H1 (cell line): ENCODE measurements at regions of chr11 and their contacts with region 1.

Region 1: GRCh38 chr11:75445315-75445953 is 12.4 kb upstream of the KLHL35 start:
- DNase-seq: peak in 1 of 2 experiments; percentile 95
- H3K4me3 ChIP-seq: no peak overlapping the region
- H3K27ac ChIP-seq: no peak overlapping the region
- H3K4me1 ChIP-seq: no peaks in the 10 kb centered on the region
- H3K27me3 ChIP-seq: no peaks in the 10 kb centered on the region
- CTCF ChIP-seq: peak; percentile 94 to 98 (median 94)
- EP300 ChIP-seq: no peak
- POLR2A ChIP-seq: no peak
- RAD21 ChIP-seq: peak; percentile 99 to 100

Region 2: GRCh38 chr11:75428281-75428724 is 17.1 kb before region 1 on chr11:
- CTCF ChIA-PET with region 1: interaction called, 133 read pairs
- POLR2A ChIA-PET with region 1: interaction called, 20 read pairs
- DNase-seq: no peak
- H3K4me3 ChIP-seq: no peak overlapping the region
- H3K27ac ChIP-seq: no peak overlapping the region
- H3K4me1 ChIP-seq: peaks cover 0 to 23% (median 15%) of the 10 kb centered on the region in 4 experiments; a peak in 6 of 7 replicates
- H3K27me3 ChIP-seq: peaks cover 47 to 66% (median 60%) of the 10 kb centered on the region in 4 experiments
- CTCF ChIP-seq: no peak
- EP300 ChIP-seq: no peak
- POLR2A ChIP-seq: no peak
- RAD21 ChIP-seq: no peak

Region 3: GRCh38 chr11:75468534-75469340 is 23.3 kb after region 1 on chr11:
- CTCF ChIA-PET with region 1: interaction called, 155 read pairs
- POLR2A ChIA-PET with region 1: no interaction called
- DNase-seq: no peak
- H3K4me3 ChIP-seq: no peak overlapping the region
- H3K27ac ChIP-seq: no peak overlapping the region
- H3K4me1 ChIP-seq: peaks cover 0 to 7% (median 3%) of the 10 kb centered on the region in 4 experiments; a peak in 5 of 7 replicates
- H3K27me3 ChIP-seq: no peaks in the 10 kb centered on the region
- CTCF ChIP-seq: no peak
- EP300 ChIP-seq: no peak
- POLR2A ChIP-seq: no peak
- RAD21 ChIP-seq: no peak

Region 4: GRCh38 chr11:75492181-75492820 is 46.9 kb after region 1 on chr11:
- CTCF ChIA-PET with region 1: interaction called, 25 read pairs
- POLR2A ChIA-PET with region 1: no interaction called
- DNase-seq: peak in 1 of 2 experiments; percentile 21
- H3K4me3 ChIP-seq: no peak overlapping the region
- H3K27ac ChIP-seq: no peak overlapping the region
- H3K4me1 ChIP-seq: peaks cover 2 to 19% (median 13%) of the 10 kb centered on the region in 4 experiments
- H3K27me3 ChIP-seq: no peaks in the 10 kb centered on the region
- CTCF ChIP-seq: no peak
- EP300 ChIP-seq: no peak
- POLR2A ChIP-seq: no peak
- RAD21 ChIP-seq: no peak

Region 5: GRCh38 chr11:75525596-75526541 is 80.4 kb after region 1 on chr11 and contains the start of gene GDPD5:
- CTCF ChIA-PET with region 1: interaction called, 603 read pairs
- POLR2A ChIA-PET with region 1: interaction called, 8 read pairs
- DNase-seq: peak; percentile 54 to 87
- H3K4me3 ChIP-seq: peak within 1 kb of the TSS; percentile 47 to 77 (median 76)
- H3K27ac ChIP-seq: no peak within 1 kb of the TSS
- H3K4me1 ChIP-seq: peaks cover 0 to 7% (median 1%) of the 10 kb centered on the region in 4 experiments; a peak in 2 of 7 replicates
- H3K27me3 ChIP-seq: peaks cover 14 to 33% (median 19%) of the 10 kb centered on the region in 4 experiments; a peak in 6 of 7 replicates
- CTCF ChIP-seq: peak; percentile 58 to 65 (median 64)
- EP300 ChIP-seq: no peak
- POLR2A ChIP-seq: peak in 1 of 2 experiments; percentile 54; a peak in 1 of 3 replicates
- RAD21 ChIP-seq: peak; percentile 15 to 51; a peak in 3 of 4 replicates
- total RNA-seq, gene GDPD5: 8.1 and 8.6 TPM in 2 replicates

Region 6: GRCh38 chr11:75554258-75555022 is 109.0 kb after region 1 on chr11:
- CTCF ChIA-PET with region 1: interaction called, 13 read pairs
- POLR2A ChIA-PET with region 1: no interaction called
- DNase-seq: peak in 1 of 2 experiments; percentile 83
- H3K4me3 ChIP-seq: no peak overlapping the region; a peak in 1 of 8 replicates
- H3K27ac ChIP-seq: peak overlapping the region; percentile 55; the same call in 1 of the 2 replicates
- H3K4me1 ChIP-seq: peaks cover 4 to 26% (median 19%) of the 10 kb centered on the region in 4 experiments
- H3K27me3 ChIP-seq: no peaks in the 10 kb centered on the region
- CTCF ChIP-seq: no peak
- EP300 ChIP-seq: no peak; a peak in 1 of 3 replicates
- POLR2A ChIP-seq: 0 out of 3 replicates have a peak, but pooled peaks of 1 of the 2 experiments have one; percentile 65
- RAD21 ChIP-seq: no peak